Panc1 (cell line): ENCODE measurements at regions of chr13 and their contacts with region 1.

Region 1: DNA sequence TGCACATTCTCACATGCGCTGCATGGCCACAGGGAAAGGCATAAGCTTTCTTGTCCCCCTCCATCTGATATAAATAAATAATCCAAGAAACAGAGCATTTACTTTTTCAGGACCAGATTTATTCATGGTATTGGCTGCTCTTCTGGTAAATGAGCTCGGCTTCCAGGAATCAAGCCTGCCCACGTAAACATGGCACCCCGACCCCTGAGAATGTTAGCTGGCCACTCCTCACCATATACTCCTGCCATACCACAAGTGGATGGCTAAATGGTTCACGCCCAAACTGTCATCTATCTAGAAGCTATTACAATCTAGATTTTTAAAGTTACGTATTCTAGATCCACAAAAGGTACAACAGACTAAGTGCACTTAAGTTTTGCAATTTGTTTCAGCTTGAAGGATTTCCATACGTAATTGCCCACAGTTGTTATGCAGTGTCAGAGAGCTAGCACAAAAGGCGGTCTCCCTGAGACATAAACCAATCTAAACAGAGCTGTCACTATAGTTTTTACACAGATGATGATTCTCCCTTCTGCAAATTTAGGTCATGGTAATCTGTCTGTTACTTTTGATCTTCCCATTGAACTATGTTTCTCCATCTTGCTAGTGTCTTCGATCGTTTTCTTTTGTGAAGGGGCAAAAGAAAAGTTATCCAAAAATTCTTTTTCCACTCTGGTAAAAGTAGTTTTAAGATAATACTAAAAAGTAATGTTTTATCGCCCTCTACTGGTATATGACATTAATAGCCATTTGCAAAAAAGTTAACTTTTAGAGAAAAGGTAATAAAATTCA is 16.2 kb upstream of the FOXO1 start:
- DNase-seq: no peak
- ATAC-seq: no peak
- H3K4me3 ChIP-seq: no peak overlapping the region
- H3K27ac ChIP-seq: no peak overlapping the region
- H3K4me1 ChIP-seq: no peaks in the 10 kb centered on the region
- H3K27me3 ChIP-seq: no peaks in the 10 kb centered on the region
- CTCF ChIP-seq: peak; percentile 62; the same call in 1 of the 2 replicates

Region 2: GRCh38 chr13:39684531-39685137 is 998.0 kb before region 1 on chr13:
- CTCF ChIA-PET with region 1: no interaction called
- POLR2A ChIA-PET with region 1: no interaction called
- in situ Hi-C with region 1: no loop called
- intact Hi-C with region 1: loop called (anchors 5 kb)
- DNase-seq: no peak
- ATAC-seq: no peak
- H3K4me3 ChIP-seq: no peak overlapping the region
- H3K27ac ChIP-seq: no peak overlapping the region
- H3K4me1 ChIP-seq: no peaks in the 10 kb centered on the region
- H3K27me3 ChIP-seq: no peaks in the 10 kb centered on the region
- CTCF ChIP-seq: peak; percentile 30; the same call in 1 of the 2 replicates

Region 3: DNA sequence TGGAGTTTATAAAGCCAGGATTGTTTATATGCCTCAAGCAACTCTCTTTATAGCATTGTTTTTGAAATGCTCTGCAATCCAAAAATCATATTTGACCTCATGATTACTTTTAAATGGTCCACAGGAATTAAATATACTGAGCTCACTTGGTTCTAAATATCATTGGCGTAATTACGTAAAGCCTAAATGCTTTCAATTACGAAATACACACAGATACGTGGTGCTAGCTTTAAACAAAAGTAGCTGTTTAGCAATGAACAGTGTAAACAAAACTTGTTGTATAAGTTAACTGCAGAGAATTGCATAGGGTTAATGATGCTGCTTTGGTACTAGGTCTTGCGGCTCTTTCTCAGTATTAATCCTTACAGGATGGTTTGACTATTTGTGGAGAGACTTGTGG is 680.6 kb before region 1 on chr13:
- CTCF ChIA-PET with region 1: interaction called, 15 read pairs
- POLR2A ChIA-PET with region 1: no interaction called
- in situ Hi-C with region 1: no loop called
- intact Hi-C with region 1: no loop called
- DNase-seq: no peak
- ATAC-seq: no peak
- H3K4me3 ChIP-seq: no peak overlapping the region
- H3K27ac ChIP-seq: no peak overlapping the region
- H3K4me1 ChIP-seq: no peaks in the 10 kb centered on the region
- H3K27me3 ChIP-seq: no peaks in the 10 kb centered on the region
- CTCF ChIP-seq: no peak

Region 4: GRCh38 chr13:40069173-40070044 is 613.2 kb before region 1 on chr13:
- CTCF ChIA-PET with region 1: no interaction called
- POLR2A ChIA-PET with region 1: no interaction called
- in situ Hi-C with region 1: no loop called
- intact Hi-C with region 1: loop called (anchors 5 kb)
- DNase-seq: peak; percentile 32
- ATAC-seq: 0 out of 2 replicates have a peak, but pooled peaks have one; percentile 72
- H3K4me3 ChIP-seq: no peak overlapping the region
- H3K27ac ChIP-seq: no peak overlapping the region
- H3K4me1 ChIP-seq: no peaks in the 10 kb centered on the region
- H3K27me3 ChIP-seq: no peaks in the 10 kb centered on the region
- CTCF ChIP-seq: peak; percentile 74

Region 5: DNA sequence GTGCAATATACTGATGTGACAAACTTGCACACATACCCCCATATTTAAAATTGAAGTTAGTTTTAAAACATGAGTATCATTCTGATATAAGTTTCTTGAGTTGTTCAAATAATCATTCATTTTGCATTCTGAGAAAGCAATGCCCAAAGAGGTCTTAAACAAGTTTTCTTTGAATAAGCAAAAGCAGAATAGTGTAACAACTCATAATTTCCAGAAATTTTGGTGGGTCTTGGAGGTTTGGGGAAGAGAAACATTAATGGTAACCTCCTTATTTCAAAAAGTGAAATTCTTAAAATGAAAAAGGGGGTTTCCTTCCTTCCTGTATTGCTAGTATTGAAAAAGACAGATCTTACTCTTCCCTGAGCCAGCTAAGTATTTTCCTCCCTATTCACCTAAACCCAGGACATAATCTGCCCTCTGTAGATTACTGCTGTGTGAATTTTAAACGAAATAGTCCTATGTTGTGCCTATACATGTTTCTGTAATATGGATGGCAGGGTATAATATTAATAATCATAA is 137.2 kb after region 1 on chr13:
- CTCF ChIA-PET with region 1: no interaction called
- POLR2A ChIA-PET with region 1: no interaction called
- in situ Hi-C with region 1: no loop called
- intact Hi-C with region 1: no loop called
- DNase-seq: no peak
- ATAC-seq: no peak
- H3K4me3 ChIP-seq: no peak overlapping the region
- H3K27ac ChIP-seq: no peak overlapping the region
- H3K4me1 ChIP-seq: no peaks in the 10 kb centered on the region
- H3K27me3 ChIP-seq: no peaks in the 10 kb centered on the region
- CTCF ChIP-seq: no peak